ENCODE measurements at regions of chr10 and their contacts with region 1.

Region 1: GRCh38 chr10:89793649-89794254 is 92.4 kb downstream of the KIF20B start:
- DNase-seq: peak; percentile 56 to 59
- H3K4me3 ChIP-seq: no peak overlapping the region
- H3K4me1 ChIP-seq: no peaks in the 10 kb centered on the region
- H3K27me3 ChIP-seq: no peaks in the 10 kb centered on the region

Region 2: DNA sequence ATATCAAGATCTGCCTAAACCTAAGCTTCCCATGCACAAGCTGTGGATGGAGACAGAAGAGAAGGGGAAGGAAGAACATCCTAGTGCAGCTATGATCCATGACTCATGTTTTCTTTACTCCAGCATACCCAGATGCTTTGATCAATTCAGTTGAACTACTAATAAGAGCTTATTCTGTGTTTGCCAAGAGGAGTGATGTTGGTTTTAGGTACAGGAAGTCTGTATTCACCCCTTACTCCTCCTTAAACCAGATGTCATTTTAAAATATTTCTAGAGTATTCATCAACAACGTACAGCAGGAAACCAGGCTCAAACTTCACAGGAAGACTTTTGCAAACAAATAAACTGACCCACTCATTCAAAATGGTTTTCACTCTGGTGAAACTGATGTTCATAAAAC is 177.9 kb before region 1 on chr10:
- in situ Hi-C with region 1: no loop called
- DNase-seq: no peak
- H3K4me3 ChIP-seq: no peak overlapping the region
- H3K4me1 ChIP-seq: no peaks in the 10 kb centered on the region; the same call in 1 of the 2 replicates
- H3K27me3 ChIP-seq: no peaks in the 10 kb centered on the region

Region 3: GRCh38 chr10:89929282-89930026 is 135.7 kb after region 1 on chr10:
- in situ Hi-C with region 1: no loop called
- DNase-seq: no peak
- H3K4me3 ChIP-seq: no peak overlapping the region
- H3K4me1 ChIP-seq: no peaks in the 10 kb centered on the region
- H3K27me3 ChIP-seq: 0 out of 2 replicates have a peak, but pooled peaks cover 3% of the 10 kb centered on the region

Region 4: DNA sequence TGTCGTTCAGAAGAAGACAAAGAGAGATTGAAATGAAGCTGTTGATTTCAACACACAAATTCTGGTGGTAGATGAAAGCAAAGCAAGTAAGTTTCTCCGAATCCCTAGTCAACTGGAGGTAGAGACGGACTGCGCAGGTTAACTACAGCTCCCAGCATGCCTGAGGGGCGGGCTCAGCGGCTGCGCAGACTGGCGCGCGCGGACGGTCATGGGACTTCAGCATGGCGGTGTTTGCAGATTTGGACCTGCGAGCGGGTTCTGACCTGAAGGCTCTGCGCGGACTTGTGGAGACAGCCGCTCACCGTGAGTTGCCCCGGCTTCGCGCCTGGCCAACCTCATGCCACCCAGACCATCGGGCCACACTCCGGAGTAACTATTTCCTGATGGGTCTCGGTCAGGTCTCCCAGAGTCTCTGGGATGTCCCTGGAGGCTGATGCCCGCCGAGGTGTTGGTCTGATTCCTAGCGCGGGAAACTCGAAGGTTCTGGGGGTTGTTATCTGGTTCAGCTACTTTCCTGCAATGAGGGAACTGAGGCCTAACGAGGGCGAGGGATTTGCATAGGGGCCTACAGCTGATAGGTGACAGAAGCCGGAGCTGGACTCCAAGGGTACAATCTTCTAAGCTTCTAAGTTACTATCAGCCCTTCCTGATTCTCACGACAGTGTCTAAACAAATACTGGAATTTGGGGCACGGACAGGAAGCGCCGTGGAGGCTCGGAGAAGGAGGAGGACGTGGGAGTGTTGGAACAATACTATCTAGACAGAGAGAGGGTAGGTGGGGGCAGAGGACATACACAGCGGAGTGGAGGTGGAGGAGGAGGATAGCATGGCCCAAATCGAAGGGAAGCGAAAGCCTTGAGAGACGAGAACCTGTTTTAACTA is 1078.3 kb after region 1 on chr10 and contains the start of gene RPP30:
- in situ Hi-C with region 1: loop called (anchors 25 kb)
- DNase-seq: peak; percentile 75 to 87
- H3K4me3 ChIP-seq: peak within 1 kb of the TSS; percentile 76
- H3K4me1 ChIP-seq: no peaks in the 10 kb centered on the region
- H3K27me3 ChIP-seq: no peaks in the 10 kb centered on the region

Measured in HAP-1 (cell line).